ENCODE measurements at regions of chr3 and their contacts with region 1.

Region 1: GRCh38 chr3:87350364-87351199 is 74.2 kb upstream of the POU1F1 start:
- DNase-seq: peak; percentile 61
- ATAC-seq: peak; percentile 67
- H3K4me3 ChIP-seq: no peak overlapping the region
- H3K4me3 Mint-ChIP-seq: no peak overlapping the region
- H3K27ac ChIP-seq: no peak overlapping the region
- H3K27ac Mint-ChIP-seq: no peak overlapping the region
- H3K4me1 ChIP-seq: no peaks in the 10 kb centered on the region
- H3K4me1 Mint-ChIP-seq: no peaks in the 10 kb centered on the region
- H3K27me3 ChIP-seq: no peaks in the 10 kb centered on the region
- H3K27me3 Mint-ChIP-seq: peaks cover 8% of the 10 kb centered on the region
- CTCF ChIP-seq: peak; percentile 99

Region 2: DNA sequence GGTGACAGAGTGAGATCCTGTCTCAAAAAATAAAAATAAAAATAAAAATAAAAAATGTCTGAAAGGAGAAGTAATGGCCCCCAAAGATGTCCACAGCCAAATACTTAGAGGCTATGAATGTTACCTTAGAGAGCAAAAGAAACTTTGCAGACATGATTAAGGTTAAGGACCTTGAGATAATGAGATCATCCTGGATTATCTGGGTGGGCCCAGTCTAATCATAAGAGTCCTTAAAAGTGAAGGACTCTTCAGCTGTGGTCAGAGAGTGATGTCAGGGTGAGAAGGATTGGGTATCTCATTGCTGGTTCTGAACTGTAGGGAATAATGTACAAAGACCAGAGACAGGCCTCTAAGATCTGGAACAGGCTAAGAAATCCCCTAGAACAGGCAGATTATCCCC is 10.7 kb after region 1 on chr3:
- CTCF ChIA-PET with region 1: interaction called, 14 read pairs
- POLR2A ChIA-PET with region 1: no interaction called
- intact Hi-C with region 1: no loop called
- DNase-seq: no peak
- ATAC-seq: no peak
- H3K4me3 ChIP-seq: no peak overlapping the region
- H3K4me3 Mint-ChIP-seq: no peak overlapping the region
- H3K27ac ChIP-seq: no peak overlapping the region
- H3K27ac Mint-ChIP-seq: no peak overlapping the region
- H3K4me1 ChIP-seq: no peaks in the 10 kb centered on the region
- H3K4me1 Mint-ChIP-seq: no peaks in the 10 kb centered on the region
- H3K27me3 ChIP-seq: no peaks in the 10 kb centered on the region
- H3K27me3 Mint-ChIP-seq: peaks cover 3% of the 10 kb centered on the region
- CTCF ChIP-seq: no peak

Region 3: GRCh38 chr3:87367664-87368063 is 17.1 kb after region 1 on chr3:
- CTCF ChIA-PET with region 1: interaction called, 14 read pairs
- POLR2A ChIA-PET with region 1: no interaction called
- intact Hi-C with region 1: no loop called
- DNase-seq: no peak
- ATAC-seq: no peak
- H3K4me3 ChIP-seq: no peak overlapping the region
- H3K4me3 Mint-ChIP-seq: no peak overlapping the region
- H3K27ac ChIP-seq: no peak overlapping the region
- H3K27ac Mint-ChIP-seq: no peak overlapping the region
- H3K4me1 ChIP-seq: no peaks in the 10 kb centered on the region
- H3K4me1 Mint-ChIP-seq: no peaks in the 10 kb centered on the region
- H3K27me3 ChIP-seq: no peaks in the 10 kb centered on the region
- H3K27me3 Mint-ChIP-seq: peaks cover 7% of the 10 kb centered on the region
- CTCF ChIP-seq: no peak

Region 4: DNA sequence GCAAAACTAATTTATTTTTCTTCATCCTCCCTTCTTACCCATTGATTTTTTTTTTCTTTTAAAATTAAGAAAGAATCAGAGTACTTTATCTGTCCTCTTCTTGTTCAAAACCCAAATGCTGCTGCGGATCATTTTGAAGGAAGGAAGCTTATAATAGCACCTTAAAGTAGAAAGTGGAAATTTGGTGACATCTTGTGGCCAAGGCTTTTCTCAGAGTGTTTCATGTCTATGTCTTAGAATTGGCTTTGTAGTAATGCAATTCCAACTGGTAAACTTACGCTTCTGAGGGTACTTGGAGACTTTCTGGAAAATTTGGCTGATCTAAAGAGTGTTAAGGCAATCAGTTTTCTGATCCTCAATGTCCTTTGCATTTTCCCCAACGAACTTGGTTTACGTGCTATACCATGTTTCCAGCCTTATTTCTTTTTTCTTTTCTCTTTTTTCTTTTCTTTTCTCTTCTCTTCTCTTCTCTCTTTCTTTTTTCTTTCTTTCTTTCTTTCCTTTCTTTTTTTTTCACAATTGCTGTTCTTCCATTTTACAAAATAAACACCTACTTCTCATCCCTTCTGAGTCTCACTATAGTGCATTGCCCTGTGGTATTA is 829.9 kb after region 1 on chr3:
- CTCF ChIA-PET with region 1: interaction called, 35 read pairs
- POLR2A ChIA-PET with region 1: no interaction called
- intact Hi-C with region 1: no loop called
- DNase-seq: peak; percentile 56
- ATAC-seq: no peak
- H3K4me3 ChIP-seq: no peak overlapping the region
- H3K4me3 Mint-ChIP-seq: no peak overlapping the region
- H3K27ac ChIP-seq: no peak overlapping the region
- H3K27ac Mint-ChIP-seq: no peak overlapping the region
- H3K4me1 ChIP-seq: no peaks in the 10 kb centered on the region
- H3K4me1 Mint-ChIP-seq: no peaks in the 10 kb centered on the region
- H3K27me3 ChIP-seq: no peaks in the 10 kb centered on the region
- H3K27me3 Mint-ChIP-seq: no peaks in the 10 kb centered on the region
- CTCF ChIP-seq: peak; percentile 68